H1 (cell line): ENCODE measurements at regions of chr11 and their contacts with region 1.

Region 1: GRCh38 chr11:363948-364761 is 5.1 kb upstream of the B4GALNT4 start:
- DNase-seq: peak; percentile 51 to 89
- H3K4me3 ChIP-seq: no peak overlapping the region
- H3K27ac ChIP-seq: no peak overlapping the region
- H3K4me1 ChIP-seq: peaks cover 0 to 10% (median 5%) of the 10 kb centered on the region in 4 experiments; a peak in 5 of 7 replicates
- H3K27me3 ChIP-seq: peaks cover 0 to 5% (median 2%) of the 10 kb centered on the region in 4 experiments; a peak in 1 of 7 replicates
- CTCF ChIP-seq: peak in 2 of 3 experiments; percentile 86 to 93; a peak in 3 of 4 replicates
- EP300 ChIP-seq: no peak
- POLR2A ChIP-seq: no peak; a peak in 1 of 3 replicates
- RAD21 ChIP-seq: peak; percentile 57 to 70

Region 2: DNA sequence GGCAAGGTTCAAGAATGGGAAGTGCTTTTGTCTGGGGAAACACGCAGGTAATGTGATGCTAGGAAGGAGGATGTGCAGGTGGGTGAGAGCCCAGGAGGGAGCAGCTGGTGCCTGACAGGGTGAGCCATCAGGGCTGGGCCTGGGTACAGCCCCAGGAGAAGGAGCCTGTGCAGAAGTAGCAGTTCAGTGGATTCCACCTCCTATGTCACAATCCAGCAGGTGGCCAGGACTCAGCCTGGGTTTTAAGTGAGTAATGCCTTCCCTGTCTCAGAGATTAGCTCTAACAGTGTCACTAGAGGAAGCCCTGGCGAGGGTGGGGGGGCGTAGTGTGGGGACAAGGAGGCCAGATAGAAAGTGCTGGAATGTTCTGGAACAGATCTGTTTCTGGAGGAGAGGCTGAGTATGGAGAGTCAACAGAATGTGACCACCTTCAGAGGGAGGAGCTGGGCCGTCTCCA is 148.5 kb before region 1 on chr11:
- CTCF ChIA-PET with region 1: interaction called, 11 read pairs
- POLR2A ChIA-PET with region 1: interaction called, 5 read pairs
- DNase-seq: no peak
- H3K4me3 ChIP-seq: no peak overlapping the region
- H3K27ac ChIP-seq: no peak overlapping the region
- H3K4me1 ChIP-seq: no peaks in the 10 kb centered on the region
- H3K27me3 ChIP-seq: no peaks in the 10 kb centered on the region
- CTCF ChIP-seq: no peak
- EP300 ChIP-seq: no peak
- POLR2A ChIP-seq: no peak
- RAD21 ChIP-seq: no peak

Region 3: GRCh38 chr11:236774-237767 is 127.1 kb before region 1 on chr11 and contains the start of gene PSMD13:
- CTCF ChIA-PET with region 1: interaction called, 11 read pairs
- POLR2A ChIA-PET with region 1: interaction called, 3 read pairs
- DNase-seq: peak in 1 of 2 experiments; percentile 87
- H3K4me3 ChIP-seq: peak within 1 kb of the TSS; percentile 96 to 98 (median 96)
- H3K27ac ChIP-seq: peak within 1 kb of the TSS; percentile 71; the same call in 1 of the 2 replicates
- H3K4me1 ChIP-seq: no peaks in the 10 kb centered on the region; a peak in 1 of 7 replicates
- H3K27me3 ChIP-seq: no peaks in the 10 kb centered on the region
- CTCF ChIP-seq: no peak
- EP300 ChIP-seq: no peak
- POLR2A ChIP-seq: peak in 1 of 2 experiments; percentile 18; a peak in 1 of 3 replicates
- RAD21 ChIP-seq: no peak
- total RNA-seq, gene PSMD13: 136 and 141 TPM in 2 replicates

Region 4: GRCh38 chr11:299951-300735 is 64.0 kb before region 1 on chr11:
- CTCF ChIA-PET with region 1: interaction called, 37 read pairs
- POLR2A ChIA-PET with region 1: interaction called, 6 read pairs
- DNase-seq: no peak
- H3K4me3 ChIP-seq: no peak overlapping the region
- H3K27ac ChIP-seq: no peak overlapping the region
- H3K4me1 ChIP-seq: peaks cover 6 to 29% (median 15%) of the 10 kb centered on the region in 4 experiments
- H3K27me3 ChIP-seq: no peaks in the 10 kb centered on the region; a peak in 1 of 7 replicates
- CTCF ChIP-seq: peak in 2 of 3 experiments; percentile 11 to 51; a peak in 3 of 4 replicates
- EP300 ChIP-seq: no peak
- POLR2A ChIP-seq: peak in 1 of 2 experiments; percentile 34; a peak in 1 of 3 replicates
- RAD21 ChIP-seq: peak; percentile 12 to 42; a peak in 1 of 4 replicates

Region 5: GRCh38 chr11:313787-314547 is 50.2 kb before region 1 on chr11 and contains the start of gene IFITM1:
- CTCF ChIA-PET with region 1: interaction called, 26 read pairs
- POLR2A ChIA-PET with region 1: interaction called, 3 read pairs
- DNase-seq: peak in 1 of 2 experiments; percentile 57
- H3K4me3 ChIP-seq: peak within 1 kb of the TSS; percentile 71 to 94 (median 86)
- H3K27ac ChIP-seq: peak within 1 kb of the TSS; percentile 43; the same call in 1 of the 2 replicates
- H3K4me1 ChIP-seq: peaks cover 9 to 41% (median 31%) of the 10 kb centered on the region in 4 experiments
- H3K27me3 ChIP-seq: no peaks in the 10 kb centered on the region
- CTCF ChIP-seq: no peak
- EP300 ChIP-seq: no peak
- POLR2A ChIP-seq: no peak
- RAD21 ChIP-seq: no peak
- total RNA-seq, gene IFITM1: 394 and 417 TPM in 2 replicates

Region 6: GRCh38 chr11:390175-390574 is 26.0 kb after region 1 on chr11:
- CTCF ChIA-PET with region 1: interaction called, 10 read pairs
- POLR2A ChIA-PET with region 1: interaction called, 6 read pairs
- DNase-seq: no peak
- H3K4me3 ChIP-seq: no peak overlapping the region
- H3K27ac ChIP-seq: no peak overlapping the region
- H3K4me1 ChIP-seq: peaks cover 6 to 14% (median 6%) of the 10 kb centered on the region in 4 experiments; a peak in 6 of 7 replicates
- H3K27me3 ChIP-seq: no peaks in the 10 kb centered on the region
- CTCF ChIP-seq: peak in 2 of 3 experiments; percentile 56 to 67; a peak in 3 of 4 replicates
- EP300 ChIP-seq: no peak
- POLR2A ChIP-seq: no peak
- RAD21 ChIP-seq: peak; percentile 37 to 57

Region 7: GRCh38 chr11:447923-448731 is 84.0 kb after region 1 on chr11:
- CTCF ChIA-PET with region 1: interaction called, 25 read pairs
- POLR2A ChIA-PET with region 1: interaction called, 7 read pairs
- DNase-seq: peak; percentile 69 to 99
- H3K4me3 ChIP-seq: peak overlapping the region; percentile 31 to 89 (median 76)
- H3K27ac ChIP-seq: peak overlapping the region; percentile 79; the same call in 1 of the 2 replicates
- H3K4me1 ChIP-seq: peaks cover 0 to 12% (median 5%) of the 10 kb centered on the region in 4 experiments; a peak in 5 of 7 replicates
- H3K27me3 ChIP-seq: no peaks in the 10 kb centered on the region
- CTCF ChIP-seq: peak in 2 of 3 experiments; percentile 62 to 80; a peak in 3 of 4 replicates
- EP300 ChIP-seq: no peak
- POLR2A ChIP-seq: peak in 1 of 2 experiments; percentile 57; a peak in 2 of 3 replicates
- RAD21 ChIP-seq: peak; percentile 60 to 69

Region 8: DNA sequence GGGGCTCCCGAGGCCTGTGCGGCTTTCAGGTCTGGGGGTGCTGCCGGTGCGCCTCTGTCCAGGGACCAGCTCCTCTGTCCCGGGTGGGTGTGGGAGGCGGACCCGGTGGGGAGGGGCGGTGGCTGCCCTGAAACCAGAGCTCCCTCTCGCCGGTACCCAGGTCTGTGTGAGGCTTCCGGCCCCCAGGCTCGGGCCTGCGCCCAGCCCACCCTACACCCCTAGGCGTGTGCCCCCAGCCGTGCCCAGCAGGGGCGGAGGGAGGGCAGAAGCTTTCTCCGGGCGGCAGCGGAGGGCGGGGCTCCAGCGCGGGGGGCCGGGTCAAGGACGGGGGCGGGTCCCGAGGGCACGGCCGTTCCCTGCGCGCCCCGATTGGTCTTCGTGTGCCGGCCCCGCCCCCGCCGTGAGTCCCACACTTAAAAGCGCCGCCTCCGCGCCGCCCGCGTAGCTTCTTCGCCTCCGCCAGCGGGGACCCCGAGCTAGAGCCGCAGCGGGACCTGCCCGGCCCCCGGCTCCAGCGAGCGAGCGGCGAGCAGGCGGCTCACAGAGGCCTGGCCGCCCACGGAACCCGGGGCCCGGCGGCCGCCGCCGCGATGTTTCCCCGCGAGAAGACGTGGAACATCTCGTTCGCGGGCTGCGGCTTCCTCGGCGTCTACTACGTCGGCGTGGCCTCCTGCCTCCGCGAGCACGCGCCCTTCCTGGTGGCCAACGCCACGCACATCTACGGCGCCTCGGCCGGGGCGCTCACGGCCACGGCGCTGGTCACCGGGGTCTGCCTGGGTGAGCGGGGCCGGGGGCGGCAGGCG is 455.2 kb after region 1 on chr11:
- CTCF ChIA-PET with region 1: no interaction called
- POLR2A ChIA-PET with region 1: no interaction called
- DNase-seq: peak in 1 of 2 experiments; percentile 95
- H3K4me3 ChIP-seq: peak overlapping the region; percentile 77 to 92 (median 80)
- H3K27ac ChIP-seq: peak overlapping the region; percentile 64; the same call in 1 of the 2 replicates
- H3K4me1 ChIP-seq: peaks cover 0 to 12% (median 9%) of the 10 kb centered on the region in 4 experiments; a peak in 5 of 7 replicates
- H3K27me3 ChIP-seq: no peaks in the 10 kb centered on the region; a peak in 2 of 7 replicates
- CTCF ChIP-seq: no peak
- EP300 ChIP-seq: no peak
- POLR2A ChIP-seq: peak in 1 of 2 experiments; percentile 82; a peak in 2 of 3 replicates
- RAD21 ChIP-seq: no peak